Activated CD4-positive, alpha-beta T cell treated with anti-CD3 and anti-CD28 coated beads for 36 hours (primary cell): ENCODE measurements at regions of chr15 and their contacts with region 1.

Region 1: GRCh38 chr15:99845009-99845408 is 111.8 kb upstream of the LYSMD4 start:
- DNase-seq: peak; percentile 58
- ATAC-seq: peak; percentile 85
- H3K4me3 Mint-ChIP-seq: no peak overlapping the region
- H3K27ac Mint-ChIP-seq: peak overlapping the region; percentile 74
- H3K4me1 Mint-ChIP-seq: peaks cover 55% of the 10 kb centered on the region
- H3K27me3 Mint-ChIP-seq: no peaks in the 10 kb centered on the region

Region 2: GRCh38 chr15:99826157-99826780 is 18.7 kb before region 1 on chr15:
- CTCF ChIA-PET with region 1: interaction called, 4 read pairs
- POLR2A ChIA-PET with region 1: no interaction called
- intact Hi-C with region 1: loop called (anchors 1 kb)
- DNase-seq: peak; percentile 31
- ATAC-seq: peak; percentile 93
- H3K4me3 Mint-ChIP-seq: peak overlapping the region; percentile 11
- H3K27ac Mint-ChIP-seq: peak overlapping the region; percentile 98
- H3K4me1 Mint-ChIP-seq: peaks cover 37% of the 10 kb centered on the region
- H3K27me3 Mint-ChIP-seq: no peaks in the 10 kb centered on the region

Region 3: DNA sequence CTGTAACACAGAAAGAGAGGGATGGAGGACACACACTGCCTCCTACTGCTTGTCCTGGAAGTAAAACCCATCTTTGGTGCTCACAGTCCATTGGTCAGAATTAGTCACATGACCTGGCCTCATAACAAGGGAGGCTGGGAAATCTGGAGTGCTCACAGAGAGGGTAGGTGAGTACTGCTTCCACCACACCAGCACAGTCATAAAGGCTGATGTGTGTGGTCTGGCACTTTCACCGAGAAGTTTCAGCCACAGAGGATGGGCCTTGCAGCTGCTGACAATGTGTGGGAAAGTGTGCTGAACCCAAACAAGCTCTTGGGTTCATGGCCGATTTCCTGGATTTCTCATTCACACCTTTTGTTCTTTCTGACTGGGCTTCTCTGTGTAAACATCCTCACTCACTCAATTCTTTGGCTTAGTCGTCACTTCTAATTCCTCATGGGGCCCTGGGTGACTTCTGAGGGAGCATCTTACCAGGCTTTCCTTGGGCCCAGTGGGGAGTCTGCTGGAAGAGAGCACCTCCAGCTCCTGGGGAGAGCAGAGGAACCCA is 858.1 kb after region 1 on chr15:
- CTCF ChIA-PET with region 1: no interaction called
- POLR2A ChIA-PET with region 1: no interaction called
- intact Hi-C with region 1: loop called in 1 of 2 experiments (anchors 5 kb)
- DNase-seq: peak; percentile 80
- ATAC-seq: peak; percentile 98
- H3K4me3 Mint-ChIP-seq: no peak overlapping the region
- H3K27ac Mint-ChIP-seq: peak overlapping the region; percentile 40
- H3K4me1 Mint-ChIP-seq: peaks cover 8% of the 10 kb centered on the region
- H3K27me3 Mint-ChIP-seq: peaks cover 22% of the 10 kb centered on the region